Caco-2 (cell line): ENCODE measurements at regions of chr2 and their contacts with region 1.

Region 1: DNA sequence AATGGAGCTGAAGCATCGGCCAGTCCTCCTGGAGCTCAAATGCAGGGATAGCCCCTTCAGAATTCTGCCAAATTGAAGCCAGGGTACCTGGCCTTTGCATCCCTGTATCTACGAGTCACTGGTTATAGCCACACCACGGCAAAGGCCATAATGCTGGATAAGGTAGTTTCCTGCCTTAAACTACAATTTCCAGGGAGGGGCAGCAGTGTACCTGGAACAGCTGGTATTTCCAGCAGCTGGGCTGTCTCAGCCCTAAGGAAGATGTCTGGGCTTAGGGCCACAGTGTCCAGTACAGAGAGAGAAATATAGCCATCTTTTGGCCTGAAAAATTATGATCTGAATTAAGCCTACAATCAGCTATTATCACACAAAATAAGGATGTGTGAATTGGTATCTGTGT is 180.3 kb downstream of the GCA start:
- DNase-seq: peak; percentile 63 to 73
- H3K4me3 ChIP-seq: no peak overlapping the region
- H3K4me3 Mint-ChIP-seq: no peak overlapping the region
- H3K27ac Mint-ChIP-seq: no peak overlapping the region
- H3K4me1 ChIP-seq: no peaks in the 10 kb centered on the region
- H3K4me1 Mint-ChIP-seq: no peaks in the 10 kb centered on the region
- H3K27me3 ChIP-seq: no peaks in the 10 kb centered on the region
- H3K27me3 Mint-ChIP-seq: peaks cover 7% of the 10 kb centered on the region
- CTCF ChIP-seq: peak; percentile 48 to 62

Region 2: GRCh38 chr2:162574615-162575452 is 50.6 kb after region 1 on chr2:
- CTCF ChIA-PET with region 1: no interaction called
- POLR2A ChIA-PET with region 1: no interaction called
- intact Hi-C with region 1: loop called (anchors 2 kb)
- DNase-seq: peak; percentile 79 to 83
- H3K4me3 ChIP-seq: no peak overlapping the region
- H3K4me3 Mint-ChIP-seq: peak overlapping the region; percentile 46
- H3K27ac Mint-ChIP-seq: peak overlapping the region; percentile 85
- H3K4me1 ChIP-seq: peaks cover 39% of the 10 kb centered on the region
- H3K4me1 Mint-ChIP-seq: peaks cover 38% of the 10 kb centered on the region
- H3K27me3 ChIP-seq: no peaks in the 10 kb centered on the region
- H3K27me3 Mint-ChIP-seq: no peaks in the 10 kb centered on the region
- CTCF ChIP-seq: peak in 1 of 2 experiments; percentile 1

Region 3: DNA sequence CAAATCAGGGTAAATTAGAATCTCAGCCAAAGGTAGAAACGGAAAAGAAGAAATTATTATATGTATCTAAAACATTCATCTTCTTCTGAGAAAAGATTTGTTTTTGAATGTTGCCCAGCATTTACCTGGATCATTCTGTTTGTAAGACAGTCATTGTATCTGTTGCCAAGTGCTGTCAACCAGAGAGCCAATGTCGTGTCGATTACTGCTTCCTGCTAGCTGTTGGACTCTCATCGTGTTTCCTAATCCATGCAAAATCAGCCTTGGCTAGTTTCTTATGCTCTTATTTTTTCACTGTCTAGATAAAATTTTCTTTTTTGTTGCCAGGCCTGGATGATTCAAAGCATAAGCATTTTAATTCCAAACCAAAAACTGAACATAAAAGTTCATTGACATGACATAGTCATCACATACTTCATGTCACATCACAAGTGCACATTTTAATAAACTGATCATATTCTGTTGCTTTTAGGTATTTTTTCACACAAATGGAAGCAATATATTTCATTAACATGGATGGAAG is 112.1 kb after region 1 on chr2:
- CTCF ChIA-PET with region 1: no interaction called
- POLR2A ChIA-PET with region 1: no interaction called
- intact Hi-C with region 1: loop called (anchors 5 kb)
- DNase-seq: no peak
- H3K4me3 ChIP-seq: no peak overlapping the region
- H3K4me3 Mint-ChIP-seq: no peak overlapping the region
- H3K27ac Mint-ChIP-seq: no peak overlapping the region
- H3K4me1 ChIP-seq: no peaks in the 10 kb centered on the region; the same call in 1 of the 2 replicates
- H3K4me1 Mint-ChIP-seq: no peaks in the 10 kb centered on the region
- H3K27me3 ChIP-seq: no peaks in the 10 kb centered on the region
- H3K27me3 Mint-ChIP-seq: peaks cover 5% of the 10 kb centered on the region
- CTCF ChIP-seq: no peak

Region 4: GRCh38 chr2:162677476-162677875 is 153.3 kb after region 1 on chr2:
- CTCF ChIA-PET with region 1: no interaction called
- POLR2A ChIA-PET with region 1: no interaction called
- intact Hi-C with region 1: loop called (anchors 10 kb)
- DNase-seq: no peak
- H3K4me3 ChIP-seq: no peak overlapping the region
- H3K4me3 Mint-ChIP-seq: no peak overlapping the region
- H3K27ac Mint-ChIP-seq: no peak overlapping the region
- H3K4me1 ChIP-seq: no peaks in the 10 kb centered on the region
- H3K4me1 Mint-ChIP-seq: no peaks in the 10 kb centered on the region
- H3K27me3 ChIP-seq: no peaks in the 10 kb centered on the region
- H3K27me3 Mint-ChIP-seq: no peaks in the 10 kb centered on the region
- CTCF ChIP-seq: no peak

Region 5: DNA sequence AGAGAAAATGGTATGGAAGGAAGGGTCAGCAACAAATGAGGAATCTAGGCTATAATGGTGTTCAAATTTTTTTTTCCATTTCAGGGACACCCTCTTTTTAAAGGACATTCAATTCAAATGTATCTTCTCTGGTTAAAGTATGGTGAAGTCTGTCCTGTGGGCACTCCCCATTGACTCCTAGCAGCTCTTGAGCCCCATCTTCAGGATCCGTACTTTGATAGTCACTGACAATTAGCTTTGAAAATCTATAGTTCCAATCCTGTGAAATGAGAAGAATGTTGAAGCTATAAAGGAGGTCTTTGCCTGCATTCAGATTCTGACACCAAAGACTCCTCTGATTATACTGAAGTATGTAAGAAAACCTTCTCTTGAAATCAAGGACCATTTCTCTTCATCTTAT is 271.1 kb after region 1 on chr2:
- CTCF ChIA-PET with region 1: interaction called, 10 read pairs
- POLR2A ChIA-PET with region 1: no interaction called
- intact Hi-C with region 1: loop called (anchors 1 kb)
- DNase-seq: peak; percentile 35 to 46
- H3K4me3 ChIP-seq: no peak overlapping the region
- H3K4me3 Mint-ChIP-seq: no peak overlapping the region
- H3K27ac Mint-ChIP-seq: no peak overlapping the region
- H3K4me1 ChIP-seq: no peaks in the 10 kb centered on the region
- H3K4me1 Mint-ChIP-seq: peaks cover 7% of the 10 kb centered on the region
- H3K27me3 ChIP-seq: no peaks in the 10 kb centered on the region
- H3K27me3 Mint-ChIP-seq: no peaks in the 10 kb centered on the region
- CTCF ChIP-seq: peak; percentile 40 to 70

Region 6: DNA sequence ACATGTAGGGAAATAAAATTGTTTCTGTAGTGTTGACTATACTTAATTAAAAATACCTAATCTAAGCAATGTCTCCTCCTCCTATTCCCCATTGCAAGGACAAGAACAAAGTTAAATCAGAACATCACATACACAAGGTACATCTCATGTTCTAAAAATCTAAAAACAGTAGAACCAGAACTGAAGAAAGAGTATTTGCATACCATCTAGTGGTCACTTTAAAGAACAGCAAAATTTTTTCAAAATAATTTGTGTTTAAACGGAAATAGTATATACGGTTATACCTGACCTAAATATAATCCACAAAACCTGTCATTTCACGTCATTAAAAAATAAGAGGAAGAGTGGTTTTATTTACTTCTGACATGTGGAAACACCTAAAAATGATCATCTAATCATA is 608.7 kb after region 1 on chr2:
- CTCF ChIA-PET with region 1: no interaction called
- POLR2A ChIA-PET with region 1: no interaction called
- intact Hi-C with region 1: loop called (anchors 1 kb)
- DNase-seq: no peak
- H3K4me3 ChIP-seq: no peak overlapping the region
- H3K4me3 Mint-ChIP-seq: no peak overlapping the region
- H3K27ac Mint-ChIP-seq: no peak overlapping the region
- H3K4me1 ChIP-seq: no peaks in the 10 kb centered on the region
- H3K4me1 Mint-ChIP-seq: no peaks in the 10 kb centered on the region
- H3K27me3 ChIP-seq: no peaks in the 10 kb centered on the region
- H3K27me3 Mint-ChIP-seq: no peaks in the 10 kb centered on the region
- CTCF ChIP-seq: peak; percentile 32 to 39